BJ (cell line): ENCODE measurements at regions of chr21 and their contacts with region 1.

Region 1: GRCh38 chr21:41612674-41613532 is 104.9 kb upstream of the TMPRSS2 start:
- DNase-seq: peak; percentile 97
- H3K4me3 ChIP-seq: no peak overlapping the region
- H3K27me3 ChIP-seq: no peaks in the 10 kb centered on the region; the same call in 1 of the 2 replicates
- CTCF ChIP-seq: peak; percentile 75

Region 2: GRCh38 chr21:41570791-41571355 is 42.0 kb before region 1 on chr21:
- CTCF ChIA-PET with region 1: no interaction called
- POLR2A ChIA-PET with region 1: no interaction called
- DNase-seq: no peak
- H3K4me3 ChIP-seq: no peak overlapping the region
- H3K27me3 ChIP-seq: no peaks in the 10 kb centered on the region; the same call in 1 of the 2 replicates
- CTCF ChIP-seq: no peak

Region 3: GRCh38 chr21:41601573-41602368 is 11.1 kb before region 1 on chr21:
- CTCF ChIA-PET with region 1: interaction called, 15 read pairs
- POLR2A ChIA-PET with region 1: no interaction called
- DNase-seq: no peak
- H3K4me3 ChIP-seq: no peak overlapping the region
- H3K27me3 ChIP-seq: peaks cover 4% of the 10 kb centered on the region
- CTCF ChIP-seq: no peak

Region 4: DNA sequence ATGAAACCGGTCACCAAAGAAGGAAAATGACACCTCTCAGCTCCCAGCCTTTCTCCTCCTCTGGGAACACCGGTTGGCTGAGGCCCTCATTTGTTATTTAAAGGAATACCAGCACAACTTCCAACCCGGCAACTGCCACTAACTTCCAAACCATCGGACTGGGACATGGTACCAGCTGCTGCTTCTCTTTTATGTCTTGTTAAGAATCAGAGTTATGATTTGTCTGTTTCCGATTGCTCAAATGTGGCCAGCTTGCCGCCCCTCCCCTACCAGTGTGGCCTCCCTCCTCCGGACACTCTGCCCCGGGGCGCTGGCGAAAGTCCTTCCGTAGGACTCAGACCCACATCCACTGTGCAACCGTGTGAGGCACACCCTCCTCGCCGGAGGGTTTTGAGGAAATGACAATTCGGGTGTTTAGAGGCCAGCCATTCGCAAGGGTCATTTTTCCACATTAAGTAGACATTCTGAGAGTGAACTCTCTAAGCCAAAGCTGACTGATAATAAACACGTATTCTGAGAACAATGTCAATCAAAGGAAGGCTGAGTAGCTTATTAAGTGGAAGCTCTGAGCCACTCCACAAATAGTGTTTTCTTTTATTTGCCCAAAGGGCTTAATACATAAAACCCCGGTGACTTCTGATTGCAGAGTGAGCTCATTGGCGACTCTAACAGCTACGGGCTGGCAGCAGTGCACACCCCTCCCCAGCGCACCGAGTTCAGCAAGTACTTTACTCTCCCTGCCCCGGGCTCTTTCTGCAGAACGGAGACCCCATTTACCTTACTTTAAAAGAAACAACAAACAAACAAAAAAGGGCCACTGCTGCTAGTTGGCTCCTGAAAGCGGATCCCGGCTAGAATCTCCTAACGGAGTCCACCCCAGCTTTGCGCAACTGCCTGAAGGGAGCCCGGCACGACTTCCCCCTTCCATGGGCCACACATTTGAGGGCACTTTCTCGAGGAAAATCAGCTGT is 148.6 kb after region 1 on chr21:
- CTCF ChIA-PET with region 1: interaction called, 12 read pairs
- POLR2A ChIA-PET with region 1: interaction called, 7 read pairs
- DNase-seq: peak; percentile 20
- H3K4me3 ChIP-seq: no peak overlapping the region
- H3K27me3 ChIP-seq: peaks cover 7% of the 10 kb centered on the region
- CTCF ChIP-seq: no peak

Region 5: DNA sequence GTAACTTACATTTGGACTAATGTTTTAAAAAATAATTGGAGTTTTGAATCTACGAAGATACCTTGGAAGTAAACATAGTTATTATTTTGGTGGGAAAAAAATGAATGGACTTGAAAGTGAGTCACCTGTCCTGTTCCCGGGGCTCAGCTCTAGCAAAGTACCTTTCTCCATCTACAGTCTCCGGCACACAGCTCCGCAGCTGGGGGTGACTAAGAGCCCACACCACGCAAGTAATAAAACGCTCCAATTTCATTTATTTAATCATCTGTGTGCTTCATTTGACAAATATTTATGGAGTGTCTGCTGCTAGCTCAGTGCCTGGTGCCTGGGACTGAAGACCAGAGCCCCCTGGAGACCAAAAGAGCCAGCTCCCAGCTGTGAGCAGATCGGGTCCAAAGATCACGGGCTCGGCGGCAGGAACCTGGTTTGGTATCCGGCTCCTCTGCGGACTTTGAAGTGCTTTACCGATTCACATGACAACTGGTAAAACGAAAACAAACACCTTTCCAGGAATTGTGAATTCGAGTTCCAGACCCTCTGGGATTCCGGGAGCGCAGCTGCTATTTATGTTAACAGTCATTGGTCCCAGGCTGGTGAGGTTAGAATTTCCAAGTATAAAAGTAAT is 155.6 kb after region 1 on chr21:
- CTCF ChIA-PET with region 1: interaction called, 153 read pairs
- POLR2A ChIA-PET with region 1: no interaction called
- DNase-seq: peak; percentile 78
- H3K4me3 ChIP-seq: peak overlapping the region; percentile 17
- H3K27me3 ChIP-seq: peaks cover 13% of the 10 kb centered on the region
- CTCF ChIP-seq: peak; percentile 69

Region 6: DNA sequence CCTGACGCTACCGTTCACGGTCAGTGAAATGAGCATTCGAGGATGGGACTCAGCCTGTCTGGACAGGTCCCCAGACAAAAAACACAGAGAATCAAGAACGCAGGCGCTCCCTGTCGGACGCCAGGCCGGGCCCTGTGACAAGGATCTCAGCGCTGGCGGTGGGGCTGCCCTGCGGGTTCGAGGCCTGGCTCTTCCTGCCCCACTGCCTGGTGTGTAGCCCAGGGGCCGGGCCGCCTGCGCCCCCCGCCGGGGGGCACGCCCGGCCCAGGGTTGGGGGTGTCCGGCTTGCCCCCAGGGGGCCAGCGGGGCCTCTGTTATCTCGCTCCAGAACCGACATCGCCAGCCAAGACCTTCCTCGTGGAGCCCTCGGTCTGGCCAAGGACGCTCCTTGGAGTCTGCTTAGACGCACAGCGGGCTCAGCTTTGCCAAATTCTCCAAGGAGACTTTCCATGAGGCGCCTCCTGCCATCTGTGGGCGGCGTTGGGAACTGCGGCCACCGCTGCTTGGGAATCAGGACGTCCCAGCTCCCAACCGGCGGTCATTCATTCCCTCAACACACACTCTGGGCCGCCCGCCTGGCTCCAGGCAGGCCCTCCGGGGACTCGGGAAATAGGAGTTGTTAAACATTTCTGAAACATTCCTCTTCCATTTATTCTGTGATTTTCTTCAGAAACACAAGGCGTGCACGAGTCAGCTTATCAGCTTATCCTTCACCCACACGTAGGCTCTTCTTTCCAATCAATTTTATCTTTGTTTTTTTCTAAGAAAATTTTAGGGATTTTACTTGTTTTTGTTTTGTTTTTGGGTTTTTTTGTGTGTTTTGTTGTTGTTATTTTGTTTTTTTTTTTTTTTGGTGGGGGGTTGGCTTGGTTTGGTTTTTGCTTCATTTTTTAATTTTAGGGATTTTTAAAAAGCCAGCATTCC is 165.3 kb after region 1 on chr21:
- CTCF ChIA-PET with region 1: interaction called, 153 read pairs
- POLR2A ChIA-PET with region 1: interaction called, 3 read pairs
- DNase-seq: no peak
- H3K4me3 ChIP-seq: no peak overlapping the region
- H3K27me3 ChIP-seq: peaks cover 5% of the 10 kb centered on the region
- CTCF ChIP-seq: peak; percentile 98

Region 7: GRCh38 chr21:41816220-41817165 is 203.6 kb after region 1 on chr21:
- CTCF ChIA-PET with region 1: interaction called, 46 read pairs
- POLR2A ChIA-PET with region 1: no interaction called
- DNase-seq: no peak
- H3K4me3 ChIP-seq: no peak overlapping the region
- H3K27me3 ChIP-seq: no peaks in the 10 kb centered on the region
- CTCF ChIP-seq: peak; percentile 95

Region 8: DNA sequence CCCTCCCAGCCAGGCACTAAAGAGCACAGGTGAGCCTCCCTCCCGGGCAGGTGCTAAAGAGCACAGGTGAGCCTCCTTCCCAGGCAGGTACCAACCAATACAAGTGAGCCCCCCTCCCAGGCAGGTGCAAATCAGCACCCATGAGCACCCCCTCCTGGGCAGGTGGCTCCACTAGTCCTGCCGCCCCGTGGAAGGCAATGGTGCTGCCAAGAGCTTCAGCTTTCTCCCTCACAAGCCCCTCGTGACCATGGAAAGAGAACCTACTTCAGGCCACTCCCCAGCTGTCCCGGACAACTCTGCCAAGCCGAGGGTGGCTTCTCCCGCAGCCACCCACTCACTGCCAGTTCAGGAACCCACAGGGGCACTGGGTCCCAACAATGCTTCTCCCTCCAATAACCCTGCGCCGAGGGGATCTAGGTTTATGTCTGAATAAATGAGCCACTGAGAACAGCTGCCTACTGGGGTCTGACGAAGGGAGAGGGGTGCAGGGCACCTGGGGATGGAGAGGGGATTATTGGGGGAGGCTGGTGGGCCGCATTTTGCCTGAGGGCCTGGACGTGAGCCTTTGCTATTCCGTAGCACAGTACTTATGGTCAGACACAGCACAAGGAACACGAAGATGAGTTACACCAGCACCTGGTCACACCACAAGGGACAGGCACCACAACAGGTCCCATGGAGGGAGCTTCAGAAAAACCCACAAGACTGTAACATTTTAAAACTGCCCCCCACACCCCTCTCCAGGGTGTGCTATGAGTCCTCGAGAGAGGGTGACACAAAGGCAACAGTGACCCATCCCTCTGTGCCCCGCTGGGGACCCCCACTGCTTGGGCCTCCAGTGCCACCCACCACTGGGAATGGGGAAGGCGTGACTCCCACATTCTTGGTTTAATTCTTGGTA is 219.9 kb after region 1 on chr21:
- CTCF ChIA-PET with region 1: no interaction called
- POLR2A ChIA-PET with region 1: no interaction called
- DNase-seq: no peak
- H3K4me3 ChIP-seq: no peak overlapping the region
- H3K27me3 ChIP-seq: no peaks in the 10 kb centered on the region
- CTCF ChIP-seq: no peak

Region 9: DNA sequence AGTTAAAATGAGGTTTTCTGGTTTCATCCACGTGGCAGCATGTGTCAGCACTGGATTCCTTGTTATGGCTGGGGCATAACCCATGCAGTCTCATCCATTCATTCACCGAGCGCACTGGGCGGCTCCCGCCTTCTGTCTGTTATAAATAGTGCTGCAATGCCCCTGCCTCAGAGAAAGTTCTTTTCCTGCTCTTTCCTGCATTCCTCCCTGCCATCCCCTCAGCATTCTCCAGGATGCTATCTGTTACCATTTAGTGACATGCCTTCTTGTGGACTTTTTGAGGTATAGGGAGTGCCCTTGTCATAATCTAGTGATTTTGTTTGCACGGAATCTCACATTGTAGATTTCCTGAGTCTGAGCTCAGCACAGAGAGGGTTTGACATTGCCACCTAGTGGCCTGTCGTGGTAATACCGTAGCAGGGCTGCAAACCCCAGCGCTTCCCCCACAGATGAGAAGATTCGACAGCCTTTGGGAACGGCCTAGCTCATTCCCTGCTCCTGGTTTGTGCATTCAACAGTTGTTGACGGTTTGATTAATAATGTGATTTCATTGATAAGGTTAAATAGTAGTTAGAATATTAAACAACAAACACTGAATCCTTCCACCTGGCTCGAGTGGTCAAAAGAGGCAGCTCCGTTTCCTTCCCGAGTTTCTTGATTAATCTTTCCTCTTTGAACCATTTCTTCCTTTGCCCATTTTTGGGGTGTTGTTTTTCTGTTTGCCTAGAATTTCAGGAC is 504.5 kb after region 1 on chr21:
- CTCF ChIA-PET with region 1: interaction called, 13 read pairs
- POLR2A ChIA-PET with region 1: no interaction called
- DNase-seq: no peak
- H3K4me3 ChIP-seq: no peak overlapping the region
- H3K27me3 ChIP-seq: peaks cover 18% of the 10 kb centered on the region
- CTCF ChIP-seq: peak; percentile 91